Heart left ventricle (tissue), 16 donors: ENCODE measurements at regions of chr16 and their contacts with region 1.

Region 1: DNA sequence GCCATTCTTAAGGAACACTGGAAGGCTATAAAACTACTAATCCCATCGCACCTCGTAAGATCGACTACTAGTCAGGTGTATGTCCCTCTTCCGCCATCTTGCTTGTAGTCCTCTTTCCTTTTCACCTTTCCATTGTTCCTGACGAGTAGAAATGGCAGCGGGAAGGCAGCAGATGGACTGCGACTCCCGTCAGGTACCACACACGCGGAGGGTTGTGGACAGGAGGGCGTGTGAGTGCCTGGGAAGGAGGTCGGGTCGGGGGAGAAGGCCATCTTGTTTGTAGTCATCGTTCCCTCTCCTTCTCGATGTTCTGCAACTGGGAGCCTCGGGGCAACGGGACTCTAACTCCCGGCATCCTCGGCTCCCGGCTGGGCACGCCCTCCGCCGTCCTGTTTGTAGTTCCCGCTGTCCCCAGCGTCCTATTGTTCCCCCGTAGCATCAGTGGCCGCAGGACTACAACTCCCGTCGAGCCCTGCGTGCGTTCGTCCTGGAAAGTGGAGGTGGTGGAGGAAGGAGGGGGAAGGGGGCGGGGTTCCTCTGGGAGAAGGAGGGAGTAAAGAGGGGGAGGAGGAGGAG is 324 bp upstream of the FBXL19 start:
- DNase-seq: peak; percentile 99 to 100 (median 100)
- ATAC-seq: peak; percentile 80 to 86 (median 84)
- H3K4me3 ChIP-seq: peak overlapping the region; percentile 52 to 80 (median 66)
- H3K27ac ChIP-seq: peak overlapping the region; percentile 74 to 98 (median 94)
- H3K4me1 ChIP-seq: peaks cover 0 to 28% (median 9%) of the 10 kb centered on the region in 12 donors
- H3K27me3 ChIP-seq: no peaks in the 10 kb centered on the region
- CTCF ChIP-seq: no peak
- POLR2A ChIP-seq: peak in 1 of 2 donors; percentile 23

Region 2: GRCh38 chr16:30698139-30698815 is 224.8 kb before region 1 on chr16:
- intact Hi-C with region 1: loop called in 1 of 10 experiments (anchors 2 kb)
- DNase-seq: peak; percentile 99 to 100 (median 99)
- ATAC-seq: peak; percentile 82 to 90 (median 88)
- H3K4me3 ChIP-seq: peak overlapping the region; percentile 79 to 100 (median 95)
- H3K27ac ChIP-seq: peak overlapping the region; percentile 95 to 100 (median 99)
- H3K4me1 ChIP-seq: peaks cover 6 to 41% (median 28%) of the 10 kb centered on the region in 12 donors
- H3K27me3 ChIP-seq: no peaks in the 10 kb centered on the region
- CTCF ChIP-seq: peak in 1 of 12 donors; percentile 8
- POLR2A ChIP-seq: peak; percentile 23 to 85

Region 3: GRCh38 chr16:30844671-30845449 is 78.2 kb before region 1 on chr16:
- intact Hi-C with region 1: loop called (anchors 1 to 5 kb)
- DNase-seq: peak in 4 of 5 donors; percentile 71 to 84 (median 78)
- ATAC-seq: peak; percentile 62 to 85 (median 84)
- H3K4me3 ChIP-seq: peak overlapping the region in 9 of 12 donors; percentile 4 to 43 (median 30)
- H3K27ac ChIP-seq: peak overlapping the region; percentile 11 to 77 (median 47)
- H3K4me1 ChIP-seq: peaks cover 0 to 25% (median 9%) of the 10 kb centered on the region in 12 donors
- H3K27me3 ChIP-seq: no peaks in the 10 kb centered on the region
- CTCF ChIP-seq: peak; percentile 77 to 96 (median 89)
- POLR2A ChIP-seq: no peak

Region 4: GRCh38 chr16:30893744-30894539 is 29.1 kb before region 1 on chr16 and contains the start of gene BCL7C:
- intact Hi-C with region 1: loop called in 1 of 10 experiments (anchors 2 kb)
- DNase-seq: peak; percentile 96 to 97 (median 96)
- ATAC-seq: peak; percentile 50 to 90 (median 81)
- H3K4me3 ChIP-seq: peak within 1 kb of the TSS; percentile 79 to 98 (median 89)
- H3K27ac ChIP-seq: peak within 1 kb of the TSS; percentile 81 to 99 (median 95)
- H3K4me1 ChIP-seq: peaks cover 0 to 46% (median 33%) of the 10 kb centered on the region in 12 donors
- H3K27me3 ChIP-seq: no peaks in the 10 kb centered on the region
- CTCF ChIP-seq: peak; percentile 21 to 82 (median 56)
- POLR2A ChIP-seq: peak in 1 of 2 donors; percentile 33
- total RNA-seq, gene BCL7C: 23.1 to 35.5 (median 28.1) TPM